ENCODE measurements at regions of chr1 and their contacts with region 1.

Region 1: DNA sequence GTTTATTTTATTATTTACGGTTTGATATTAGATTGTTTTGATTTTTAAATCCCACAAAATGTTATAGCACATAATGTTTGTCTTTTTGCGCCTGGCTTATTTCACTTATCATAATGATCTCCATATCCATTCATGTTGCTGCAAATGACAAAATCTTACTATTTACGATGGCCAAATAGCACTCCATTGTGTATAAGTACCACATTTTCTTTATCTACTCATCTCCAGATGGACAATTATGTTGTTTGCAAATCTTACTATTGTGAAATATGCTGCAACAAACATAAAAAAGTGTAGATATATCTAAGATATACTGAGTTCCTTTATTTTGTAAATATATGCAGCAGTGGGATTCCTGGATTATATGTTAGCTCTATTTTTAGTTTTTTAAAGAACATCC is 1568.3 kb downstream of the AMY1C start:
- DNase-seq: no peak
- ATAC-seq: no peak
- H3K4me3 ChIP-seq: no peak overlapping the region
- H3K27ac ChIP-seq: no peak overlapping the region
- H3K4me1 ChIP-seq: no peaks in the 10 kb centered on the region
- H3K27me3 ChIP-seq: no peaks in the 10 kb centered on the region
- CTCF ChIP-seq: no peak
- POLR2A ChIP-seq: no peak
- RAD21 ChIP-seq: no peak

Region 2: DNA sequence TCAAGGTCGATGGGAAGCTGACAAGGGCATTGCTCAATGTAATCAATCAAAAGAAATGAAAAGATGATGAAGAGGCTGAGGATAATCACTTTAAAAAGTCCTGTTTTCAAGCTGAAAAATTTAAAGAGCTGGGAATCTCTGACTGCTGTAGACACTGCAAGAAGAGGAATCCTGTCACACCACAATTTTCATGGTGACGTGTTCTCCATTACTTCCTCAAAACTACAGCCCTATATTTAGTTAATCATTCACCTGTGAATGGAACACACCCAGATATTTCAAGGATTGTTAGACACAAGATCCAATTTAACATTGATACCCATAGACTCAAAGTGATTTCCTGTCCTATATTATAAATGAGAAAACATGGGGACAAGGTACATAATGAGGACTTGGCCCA is 520.0 kb before region 1 on chr1:
- CTCF ChIA-PET with region 1: no interaction called
- POLR2A ChIA-PET with region 1: no interaction called
- dilution Hi-C with region 1: no loop called
- in situ Hi-C with region 1: no loop called
- intact Hi-C with region 1: no loop called
- DNase-seq: no peak
- ATAC-seq: no peak
- H3K4me3 ChIP-seq: no peak overlapping the region
- H3K27ac ChIP-seq: no peak overlapping the region
- H3K4me1 ChIP-seq: no peaks in the 10 kb centered on the region
- H3K27me3 ChIP-seq: no peaks in the 10 kb centered on the region
- CTCF ChIP-seq: no peak
- POLR2A ChIP-seq: no peak
- RAD21 ChIP-seq: no peak

Region 3: GRCh38 chr1:105122041-105122440 is 195.9 kb before region 1 on chr1:
- CTCF ChIA-PET with region 1: interaction called, 11 read pairs
- POLR2A ChIA-PET with region 1: no interaction called
- dilution Hi-C with region 1: no loop called
- in situ Hi-C with region 1: no loop called
- intact Hi-C with region 1: no loop called
- DNase-seq: no peak
- ATAC-seq: no peak
- H3K4me3 ChIP-seq: no peak overlapping the region
- H3K27ac ChIP-seq: no peak overlapping the region
- H3K4me1 ChIP-seq: no peaks in the 10 kb centered on the region
- H3K27me3 ChIP-seq: no peaks in the 10 kb centered on the region
- CTCF ChIP-seq: no peak
- POLR2A ChIP-seq: no peak
- RAD21 ChIP-seq: no peak

Region 4: DNA sequence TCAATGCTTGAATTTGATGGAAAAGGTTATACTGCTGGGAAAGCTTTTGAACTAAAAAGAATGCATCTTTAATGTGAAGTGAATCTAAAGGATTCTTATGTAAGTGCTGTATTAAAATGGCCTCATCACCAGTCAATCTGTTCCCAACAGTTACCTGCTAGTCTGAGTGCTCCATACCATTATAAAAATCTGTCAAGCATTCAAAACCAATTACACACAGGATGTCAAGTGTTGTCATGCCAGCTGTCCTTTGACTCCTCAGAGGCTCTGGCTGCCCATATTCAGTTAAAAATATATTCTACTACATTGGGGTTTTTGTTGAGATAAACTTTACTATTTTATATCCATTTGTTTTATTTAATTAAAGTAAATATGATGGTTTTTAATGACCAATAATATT is 19.4 kb after region 1 on chr1:
- CTCF ChIA-PET with region 1: interaction called, 10 read pairs
- POLR2A ChIA-PET with region 1: no interaction called
- dilution Hi-C with region 1: no loop called
- in situ Hi-C with region 1: no loop called
- intact Hi-C with region 1: no loop called
- DNase-seq: no peak
- ATAC-seq: no peak
- H3K4me3 ChIP-seq: no peak overlapping the region
- H3K27ac ChIP-seq: no peak overlapping the region
- H3K4me1 ChIP-seq: no peaks in the 10 kb centered on the region
- H3K27me3 ChIP-seq: no peaks in the 10 kb centered on the region
- CTCF ChIP-seq: no peak
- POLR2A ChIP-seq: no peak
- RAD21 ChIP-seq: no peak